ENCODE measurements at regions of chr3 and their contacts with region 1.

Region 1: DNA sequence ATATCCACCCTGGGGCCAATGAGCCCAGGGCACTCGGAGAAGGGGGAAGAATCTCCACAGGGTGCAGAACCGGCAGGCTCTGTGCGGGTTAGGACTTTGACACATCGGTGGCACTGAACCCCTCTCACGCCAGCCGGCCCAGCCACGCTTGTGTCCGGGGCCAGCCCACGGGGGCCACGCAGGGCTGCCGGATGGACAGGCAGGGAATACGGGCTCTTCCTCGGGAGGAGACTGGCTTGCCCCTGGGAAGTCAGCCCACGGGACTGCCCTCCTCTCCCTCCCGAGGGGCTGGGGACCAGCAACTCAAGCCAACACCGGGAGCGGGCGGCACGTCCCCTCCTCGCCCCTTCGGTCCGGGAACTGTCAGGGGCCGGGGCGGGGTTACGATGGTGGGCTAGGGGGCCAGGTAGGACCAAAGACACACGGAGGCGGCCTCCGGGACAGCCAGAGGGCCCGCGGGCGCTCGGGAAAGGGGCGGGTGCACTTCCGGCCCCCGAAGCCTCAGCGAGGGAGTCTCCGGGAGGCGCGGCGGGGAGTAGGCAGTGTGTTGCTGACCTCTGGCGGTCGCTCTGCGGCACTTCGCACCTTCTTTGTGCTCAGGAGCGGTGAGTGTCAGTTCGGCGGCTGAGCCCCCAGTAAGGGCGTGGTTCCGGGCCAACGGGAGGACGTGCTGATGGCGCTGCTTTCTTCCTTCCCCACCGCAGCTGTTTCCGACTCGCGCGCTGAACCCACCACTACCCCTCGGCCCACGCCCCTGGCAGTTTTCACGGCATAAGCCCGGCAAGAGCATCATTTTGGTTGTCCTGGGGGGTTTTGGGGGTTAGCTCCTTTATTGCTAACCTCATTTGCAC is 5.1 kb upstream of the CYP8B1 start:
- DNase-seq: peak; percentile 90
- H3K4me3 ChIP-seq: peak overlapping the region; percentile 61 to 65
- H3K27ac ChIP-seq: peak overlapping the region in 1 of 2 donors; percentile 70
- H3K4me1 ChIP-seq: no peaks in the 10 kb centered on the region
- H3K27me3 ChIP-seq: no peaks in the 10 kb centered on the region
- CTCF ChIP-seq: peak; percentile 86 to 93 (median 86)
- POLR2A ChIP-seq: no peak

Region 2: GRCh38 chr3:42772670-42773408 is 108.0 kb before region 1 on chr3 and contains the start of gene CCDC13:
- intact Hi-C with region 1: loop called (anchors 10 kb)
- DNase-seq: peak; percentile 97
- H3K4me3 ChIP-seq: peak within 1 kb of the TSS; percentile 59 to 67
- H3K27ac ChIP-seq: peak within 1 kb of the TSS in 1 of 2 donors; percentile 63
- H3K4me1 ChIP-seq: peaks cover 6% of the 10 kb centered on the region
- H3K27me3 ChIP-seq: no peaks in the 10 kb centered on the region
- CTCF ChIP-seq: no peak
- POLR2A ChIP-seq: no peak
- total RNA-seq, gene CCDC13: 6.5 to 12.5 TPM

Region 3: GRCh38 chr3:42839616-42840015 is 41.2 kb before region 1 on chr3:
- intact Hi-C with region 1: loop called (anchors 10 kb)
- DNase-seq: peak; percentile 64
- H3K4me3 ChIP-seq: no peak overlapping the region
- H3K27ac ChIP-seq: no peak overlapping the region
- H3K4me1 ChIP-seq: peaks cover 5% of the 10 kb centered on the region
- H3K27me3 ChIP-seq: no peaks in the 10 kb centered on the region
- CTCF ChIP-seq: peak; percentile 71 to 93 (median 73)
- POLR2A ChIP-seq: no peak

Measured in testis (tissue), 5 donors.